SK-N-SH (cell line): ENCODE measurements at regions of chr5 and their contacts with region 1.

Region 1: GRCh38 chr5:54492178-54492577 is 25.4 kb upstream of the SNX18 start:
- DNase-seq: no peak
- H3K4me3 ChIP-seq: no peak overlapping the region
- H3K27ac ChIP-seq: no peak overlapping the region
- H3K4me1 ChIP-seq: no peaks in the 10 kb centered on the region
- H3K27me3 ChIP-seq: peaks cover 12% of the 10 kb centered on the region
- CTCF ChIP-seq: no peak
- EP300 ChIP-seq: no peak
- RAD21 ChIP-seq: no peak

Region 2: GRCh38 chr5:54162184-54162583 is 330.0 kb before region 1 on chr5:
- CTCF ChIA-PET with region 1: no interaction called
- POLR2A ChIA-PET with region 1: no interaction called
- DNase-seq: no peak
- H3K4me3 ChIP-seq: no peak overlapping the region
- H3K27ac ChIP-seq: no peak overlapping the region
- H3K4me1 ChIP-seq: no peaks in the 10 kb centered on the region; a peak in 3 of 4 replicates
- H3K27me3 ChIP-seq: no peaks in the 10 kb centered on the region
- CTCF ChIP-seq: no peak
- EP300 ChIP-seq: no peak
- RAD21 ChIP-seq: no peak

Region 3: DNA sequence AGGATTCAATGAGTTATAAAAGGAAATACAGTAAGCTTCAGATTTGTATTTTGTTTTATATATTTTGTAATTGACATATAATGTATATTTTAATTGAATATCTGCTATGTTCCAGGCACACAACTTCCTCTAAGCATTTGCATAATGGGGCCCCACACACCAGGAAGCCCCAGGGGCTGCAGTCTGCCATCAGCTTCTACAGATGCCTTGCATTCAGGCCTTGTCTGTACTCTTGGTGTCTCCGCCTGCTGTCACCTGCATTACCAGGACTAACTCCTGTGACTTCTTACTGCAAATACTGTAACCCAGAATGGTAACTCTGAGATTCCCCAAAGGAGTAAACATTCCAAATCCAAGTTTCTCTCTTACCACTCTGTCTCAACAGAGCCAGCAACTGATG is 202.4 kb before region 1 on chr5:
- CTCF ChIA-PET with region 1: no interaction called
- POLR2A ChIA-PET with region 1: no interaction called
- DNase-seq: no peak
- H3K4me3 ChIP-seq: no peak overlapping the region
- H3K27ac ChIP-seq: no peak overlapping the region
- H3K4me1 ChIP-seq: peaks cover 0 to 2% of the 10 kb centered on the region in 2 experiments; a peak in 1 of 4 replicates
- H3K27me3 ChIP-seq: no peaks in the 10 kb centered on the region
- CTCF ChIP-seq: no peak
- EP300 ChIP-seq: no peak
- RAD21 ChIP-seq: no peak

Region 4: GRCh38 chr5:54357408-54358058 is 134.6 kb before region 1 on chr5:
- CTCF ChIA-PET with region 1: no interaction called
- POLR2A ChIA-PET with region 1: no interaction called
- DNase-seq: peak; percentile 30
- H3K4me3 ChIP-seq: no peak overlapping the region; a peak in 1 of 4 replicates
- H3K27ac ChIP-seq: peak overlapping the region; percentile 48 to 58; a peak in 3 of 4 replicates
- H3K4me1 ChIP-seq: peaks cover 6 to 13% of the 10 kb centered on the region in 2 experiments
- H3K27me3 ChIP-seq: no peaks in the 10 kb centered on the region
- CTCF ChIP-seq: no peak
- EP300 ChIP-seq: peak in 1 of 2 experiments; percentile 75; a peak in 2 of 4 replicates
- RAD21 ChIP-seq: no peak

Region 5: DNA sequence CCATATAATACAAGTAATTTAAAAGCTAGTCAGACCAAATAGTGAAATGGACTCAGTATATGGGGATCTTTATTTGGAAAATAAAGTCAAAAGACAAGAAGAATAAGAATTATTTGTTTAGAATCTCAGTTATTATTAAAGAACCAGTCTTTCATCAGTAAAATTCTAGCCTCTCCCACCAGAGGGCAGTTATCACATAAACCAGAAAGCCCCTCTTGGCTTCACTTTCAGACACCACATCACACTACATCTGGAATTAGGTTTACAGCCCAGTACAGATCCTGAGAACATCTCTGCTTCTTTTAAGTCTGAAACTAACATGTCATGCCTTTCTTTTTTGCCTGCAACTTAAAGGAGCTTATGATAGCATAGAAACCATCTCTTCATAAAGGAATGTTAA is 48.9 kb before region 1 on chr5:
- CTCF ChIA-PET with region 1: interaction called, 28 read pairs
- POLR2A ChIA-PET with region 1: no interaction called
- DNase-seq: peak; percentile 40
- H3K4me3 ChIP-seq: no peak overlapping the region
- H3K27ac ChIP-seq: no peak overlapping the region
- H3K4me1 ChIP-seq: no peaks in the 10 kb centered on the region; a peak in 1 of 4 replicates
- H3K27me3 ChIP-seq: no peaks in the 10 kb centered on the region; the same call in 1 of the 2 replicates
- CTCF ChIP-seq: peak; percentile 68
- EP300 ChIP-seq: no peak
- RAD21 ChIP-seq: peak; percentile 59

Region 6: GRCh38 chr5:54469622-54470021 is 22.6 kb before region 1 on chr5:
- CTCF ChIA-PET with region 1: interaction called, 17 read pairs
- POLR2A ChIA-PET with region 1: no interaction called
- DNase-seq: no peak
- H3K4me3 ChIP-seq: peak overlapping the region; percentile 37 to 64; a peak in 3 of 4 replicates
- H3K27ac ChIP-seq: peak overlapping the region; percentile 70 to 71
- H3K4me1 ChIP-seq: no peaks in the 10 kb centered on the region
- H3K27me3 ChIP-seq: no peaks in the 10 kb centered on the region
- CTCF ChIP-seq: no peak
- EP300 ChIP-seq: no peak
- RAD21 ChIP-seq: no peak

Region 7: GRCh38 chr5:54524704-54525103 is 32.5 kb after region 1 on chr5:
- CTCF ChIA-PET with region 1: interaction called, 13 read pairs
- POLR2A ChIA-PET with region 1: no interaction called
- DNase-seq: peak; percentile 64
- H3K4me3 ChIP-seq: no peak overlapping the region
- H3K27ac ChIP-seq: peak overlapping the region in 1 of 2 experiments; percentile 43; a peak in 2 of 4 replicates
- H3K4me1 ChIP-seq: peaks cover 3 to 39% of the 10 kb centered on the region in 2 experiments; a peak in 3 of 4 replicates
- H3K27me3 ChIP-seq: no peaks in the 10 kb centered on the region
- CTCF ChIP-seq: no peak
- EP300 ChIP-seq: peak in 1 of 2 experiments; percentile 45; a peak in 1 of 4 replicates
- RAD21 ChIP-seq: no peak